ENCODE measurements at regions of chr5 and their contacts with region 1.

Region 1: GRCh38 chr5:118987988-118988865 is at the start of gene DTWD2:
- DNase-seq: peak; percentile 84 to 98 (median 95)
- ATAC-seq: peak; percentile 95
- H3K4me3 ChIP-seq: peak within 1 kb of the TSS; percentile 59
- H3K4me3 Mint-ChIP-seq: peak within 1 kb of the TSS; percentile 78 to 87 (median 84)
- H3K27ac ChIP-seq: peak within 1 kb of the TSS; percentile 74
- H3K27ac Mint-ChIP-seq: peak within 1 kb of the TSS in 8 of 9 donors; percentile 19 to 84 (median 79)
- H3K4me1 ChIP-seq: peaks cover 6 to 8% of the 10 kb centered on the region in 2 donors
- H3K4me1 Mint-ChIP-seq: peaks cover 14 to 39% (median 28%) of the 10 kb centered on the region in 7 donors
- H3K27me3 ChIP-seq: no peaks in the 10 kb centered on the region
- H3K27me3 Mint-ChIP-seq: peaks cover 0 to 2% (median 0%) of the 10 kb centered on the region in 5 donors
- total RNA-seq, gene DTWD2: 2.6 to 5.8 (median 3.4) TPM

Region 2: DNA sequence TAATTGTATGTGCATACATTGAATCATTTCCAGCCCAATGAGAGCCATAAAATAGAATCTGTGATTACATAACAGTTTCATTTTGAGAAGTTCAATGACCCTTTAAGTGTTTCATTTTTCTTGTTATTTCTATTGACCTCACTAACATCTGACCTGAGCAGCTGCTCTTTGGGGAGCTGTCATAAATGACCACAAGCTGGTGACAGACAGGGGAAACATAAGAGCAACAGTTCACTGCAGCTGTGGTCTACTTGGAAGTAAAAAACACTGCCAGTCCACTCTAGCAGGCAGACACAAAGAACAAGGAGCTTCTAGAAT is 265.2 kb before region 1 on chr5:
- CTCF ChIA-PET with region 1: no interaction called
- POLR2A ChIA-PET with region 1: no interaction called
- intact Hi-C with region 1: no loop called
- DNase-seq: no peak
- ATAC-seq: no peak
- H3K4me3 ChIP-seq: no peak overlapping the region
- H3K4me3 Mint-ChIP-seq: no peak overlapping the region
- H3K27ac ChIP-seq: no peak overlapping the region
- H3K27ac Mint-ChIP-seq: no peak overlapping the region
- H3K4me1 ChIP-seq: no peaks in the 10 kb centered on the region
- H3K4me1 Mint-ChIP-seq: no peaks in the 10 kb centered on the region
- H3K27me3 ChIP-seq: no peaks in the 10 kb centered on the region
- H3K27me3 Mint-ChIP-seq: peaks cover 0 to 5% (median 0%) of the 10 kb centered on the region in 5 donors

Region 3: GRCh38 chr5:119070828-119071572 is 82.8 kb after region 1 on chr5 and contains the start of gene DMXL1:
- CTCF ChIA-PET with region 1: no interaction called
- POLR2A ChIA-PET with region 1: interaction called, 10 read pairs
- intact Hi-C with region 1: loop called (anchors 1 kb)
- DNase-seq: peak; percentile 94 to 99 (median 98)
- ATAC-seq: peak; percentile 92
- H3K4me3 ChIP-seq: peak within 1 kb of the TSS; percentile 63
- H3K4me3 Mint-ChIP-seq: peak within 1 kb of the TSS; percentile 90 to 100 (median 98)
- H3K27ac ChIP-seq: peak within 1 kb of the TSS; percentile 93
- H3K27ac Mint-ChIP-seq: peak within 1 kb of the TSS; percentile 96 to 100 (median 99)
- H3K4me1 ChIP-seq: peaks cover 22 to 25% of the 10 kb centered on the region in 2 donors
- H3K4me1 Mint-ChIP-seq: peaks cover 24 to 44% (median 38%) of the 10 kb centered on the region in 7 donors
- H3K27me3 ChIP-seq: no peaks in the 10 kb centered on the region
- H3K27me3 Mint-ChIP-seq: peaks cover 0 to 2% (median 0%) of the 10 kb centered on the region in 5 donors
- total RNA-seq, gene DMXL1: 30.5 to 40.8 (median 32.4) TPM

Region 4: GRCh38 chr5:119302916-119303897 is 315.0 kb after region 1 on chr5:
- CTCF ChIA-PET with region 1: interaction called, 7 read pairs
- POLR2A ChIA-PET with region 1: no interaction called
- intact Hi-C with region 1: loop called in 1 of 2 experiments (anchors 1 kb)
- DNase-seq: peak in 3 of 9 donors; percentile 36 to 66 (median 51)
- ATAC-seq: peak; percentile 78
- H3K4me3 ChIP-seq: peak overlapping the region; percentile 24
- H3K4me3 Mint-ChIP-seq: peak overlapping the region; percentile 63 to 93 (median 76)
- H3K27ac ChIP-seq: peak overlapping the region; percentile 74
- H3K27ac Mint-ChIP-seq: peak overlapping the region; percentile 85 to 100 (median 98)
- H3K4me1 ChIP-seq: peaks cover 81 to 82% of the 10 kb centered on the region in 2 donors
- H3K4me1 Mint-ChIP-seq: peaks cover 57 to 97% (median 94%) of the 10 kb centered on the region in 7 donors
- H3K27me3 ChIP-seq: no peaks in the 10 kb centered on the region
- H3K27me3 Mint-ChIP-seq: no peaks in the 10 kb centered on the region

Region 5: DNA sequence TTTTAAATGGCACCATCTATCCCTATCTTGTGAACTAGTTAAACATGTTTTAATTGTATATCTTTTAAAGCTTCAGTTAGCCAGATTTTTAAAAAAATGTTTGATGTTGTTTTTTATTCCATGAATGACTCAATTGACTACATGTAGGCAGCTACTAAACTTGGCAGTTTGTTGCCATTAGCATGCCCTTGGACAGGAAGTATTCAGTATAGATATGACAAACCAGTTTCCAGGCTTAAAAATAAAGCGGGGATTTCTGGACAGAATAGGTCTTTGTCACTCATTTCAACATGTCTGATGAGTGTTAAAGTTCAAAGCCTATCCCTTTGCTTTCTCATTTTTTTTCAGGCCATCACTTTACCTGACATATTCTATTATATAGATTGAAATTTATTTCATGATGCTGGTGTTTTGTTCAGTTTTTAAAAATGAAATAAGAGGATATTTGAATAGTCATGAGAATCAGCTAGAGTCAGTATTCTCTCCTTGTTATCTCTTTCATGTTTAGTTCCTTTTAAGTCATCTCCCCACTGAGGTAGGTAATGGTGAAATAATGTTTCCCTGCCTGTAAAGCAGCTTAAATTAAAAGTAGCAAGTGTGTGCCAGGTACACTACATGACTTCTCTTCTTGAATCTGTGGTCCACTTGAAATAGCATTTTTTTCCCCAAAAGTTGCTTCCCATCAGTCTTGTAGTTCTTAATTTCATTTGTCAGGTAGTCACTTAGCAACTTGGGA is 379.4 kb after region 1 on chr5:
- CTCF ChIA-PET with region 1: interaction called, 4 read pairs
- POLR2A ChIA-PET with region 1: no interaction called
- intact Hi-C with region 1: loop called in 1 of 2 experiments (anchors 1 kb)
- DNase-seq: peak in 2 of 9 donors; percentile 20 to 46
- ATAC-seq: peak; percentile 74
- H3K4me3 ChIP-seq: no peak overlapping the region
- H3K4me3 Mint-ChIP-seq: peak overlapping the region; percentile 52 to 78 (median 73)
- H3K27ac ChIP-seq: peak overlapping the region; percentile 55
- H3K27ac Mint-ChIP-seq: peak overlapping the region; percentile 24 to 96 (median 84)
- H3K4me1 ChIP-seq: peaks cover 54 to 76% of the 10 kb centered on the region in 2 donors
- H3K4me1 Mint-ChIP-seq: peaks cover 49 to 89% (median 84%) of the 10 kb centered on the region in 7 donors
- H3K27me3 ChIP-seq: no peaks in the 10 kb centered on the region
- H3K27me3 Mint-ChIP-seq: no peaks in the 10 kb centered on the region

Region 6: DNA sequence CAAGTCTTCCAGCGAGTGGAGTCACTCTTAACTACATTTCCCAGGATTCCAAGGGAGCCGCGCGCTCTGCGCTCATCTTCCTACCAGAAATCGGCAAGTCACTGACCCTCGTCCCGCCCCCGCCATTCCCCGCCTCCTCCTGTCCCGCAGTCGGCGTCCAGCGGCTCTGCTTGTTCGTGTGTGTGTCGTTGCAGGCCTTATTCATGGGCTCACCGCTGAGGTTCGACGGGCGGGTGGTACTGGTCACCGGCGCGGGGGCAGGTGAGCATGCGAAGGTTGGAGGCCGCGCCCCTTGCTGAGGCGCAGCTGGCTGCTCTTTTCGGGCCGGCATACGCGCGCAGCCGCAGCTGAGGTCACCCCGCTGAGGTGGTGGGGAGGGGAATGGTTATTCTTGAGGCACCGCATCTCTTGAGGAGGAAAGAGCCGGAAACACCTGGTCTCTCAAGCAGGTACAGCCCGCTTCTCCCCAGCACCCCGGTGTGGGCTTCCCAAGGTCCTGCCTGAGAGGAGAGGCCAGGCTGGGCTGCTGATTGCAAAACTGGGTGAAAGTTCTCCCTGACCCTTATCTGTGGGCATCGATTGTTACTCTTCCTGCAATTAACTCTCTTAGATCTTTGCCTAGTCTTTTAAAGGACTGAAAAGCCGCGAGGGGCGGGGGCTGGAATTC is 464.3 kb after region 1 on chr5 and contains the start of gene HSD17B4:
- CTCF ChIA-PET with region 1: interaction called, 9 read pairs
- POLR2A ChIA-PET with region 1: interaction called, 4 read pairs
- intact Hi-C with region 1: loop called in 1 of 2 experiments (anchors 1 kb)
- DNase-seq: peak; percentile 61 to 89 (median 85)
- ATAC-seq: peak; percentile 94
- H3K4me3 ChIP-seq: peak within 1 kb of the TSS; percentile 86
- H3K4me3 Mint-ChIP-seq: peak within 1 kb of the TSS; percentile 86 to 98 (median 92)
- H3K27ac ChIP-seq: peak within 1 kb of the TSS; percentile 84
- H3K27ac Mint-ChIP-seq: peak within 1 kb of the TSS; percentile 80 to 94 (median 86)
- H3K4me1 ChIP-seq: peaks cover 5 to 9% of the 10 kb centered on the region in 2 donors
- H3K4me1 Mint-ChIP-seq: peaks cover 11 to 24% (median 20%) of the 10 kb centered on the region in 7 donors
- H3K27me3 ChIP-seq: no peaks in the 10 kb centered on the region
- H3K27me3 Mint-ChIP-seq: peaks cover 0 to 17% (median 0%) of the 10 kb centered on the region in 5 donors
- total RNA-seq, gene HSD17B4: 22.5 to 77.2 (median 71.0) TPM

Region 7: GRCh38 chr5:120457839-120458507 is 1469.7 kb after region 1 on chr5:
- CTCF ChIA-PET with region 1: no interaction called
- POLR2A ChIA-PET with region 1: no interaction called
- intact Hi-C with region 1: loop called in 1 of 2 experiments (anchors 1 kb)
- DNase-seq: peak in 8 of 9 donors; percentile 10 to 52 (median 18)
- ATAC-seq: peak; percentile 71
- H3K4me3 ChIP-seq: peak overlapping the region; percentile 43
- H3K4me3 Mint-ChIP-seq: peak overlapping the region; percentile 44 to 80 (median 78)
- H3K27ac ChIP-seq: no peak overlapping the region
- H3K27ac Mint-ChIP-seq: peak overlapping the region in 5 of 9 donors; percentile 11 to 60 (median 40)
- H3K4me1 ChIP-seq: no peaks in the 10 kb centered on the region
- H3K4me1 Mint-ChIP-seq: peaks cover 0 to 10% (median 4%) of the 10 kb centered on the region in 7 donors
- H3K27me3 ChIP-seq: no peaks in the 10 kb centered on the region
- H3K27me3 Mint-ChIP-seq: peaks cover 4 to 21% (median 10%) of the 10 kb centered on the region in 5 donors